ENCODE measurements at regions of chr2 and their contacts with region 1.

Region 1: GRCh38 chr2:136305517-136306192 is 187.7 kb upstream of the CXCR4 start:
- DNase-seq: peak; percentile 49 to 76
- ATAC-seq: peak; percentile 96 to 100 (median 98)
- H3K4me3 ChIP-seq: no peak overlapping the region
- H3K4me3 Mint-ChIP-seq: no peak overlapping the region
- H3K27ac ChIP-seq: no peak overlapping the region
- H3K27ac Mint-ChIP-seq: peak overlapping the region in 1 of 2 donors; percentile 72
- H3K4me1 ChIP-seq: peaks cover 10% of the 10 kb centered on the region
- H3K4me1 Mint-ChIP-seq: peaks cover 9 to 11% of the 10 kb centered on the region in 2 donors
- H3K27me3 ChIP-seq: no peaks in the 10 kb centered on the region
- H3K27me3 Mint-ChIP-seq: peaks cover 10 to 14% of the 10 kb centered on the region in 2 donors
- CTCF ChIP-seq: no peak

Region 2: GRCh38 chr2:136281281-136282114 is 24.2 kb before region 1 on chr2:
- intact Hi-C with region 1: loop called (anchors 1 kb)
- DNase-seq: peak; percentile 46 to 91
- ATAC-seq: peak; percentile 85 to 91 (median 85)
- H3K4me3 ChIP-seq: no peak overlapping the region
- H3K4me3 Mint-ChIP-seq: peak overlapping the region; percentile 13
- H3K27ac ChIP-seq: peak overlapping the region; percentile 66
- H3K27ac Mint-ChIP-seq: peak overlapping the region; percentile 91 to 92
- H3K4me1 ChIP-seq: peaks cover 35% of the 10 kb centered on the region
- H3K4me1 Mint-ChIP-seq: peaks cover 28 to 29% of the 10 kb centered on the region in 2 donors
- H3K27me3 ChIP-seq: no peaks in the 10 kb centered on the region
- H3K27me3 Mint-ChIP-seq: no peaks in the 10 kb centered on the region
- CTCF ChIP-seq: no peak

Region 3: GRCh38 chr2:136411946-136412345 is 106.3 kb after region 1 on chr2:
- intact Hi-C with region 1: no loop called
- DNase-seq: no peak
- ATAC-seq: no peak
- H3K4me3 ChIP-seq: no peak overlapping the region
- H3K4me3 Mint-ChIP-seq: no peak overlapping the region
- H3K27ac ChIP-seq: no peak overlapping the region
- H3K27ac Mint-ChIP-seq: no peak overlapping the region
- H3K4me1 ChIP-seq: peaks cover 5% of the 10 kb centered on the region
- H3K4me1 Mint-ChIP-seq: peaks cover 0 to 5% of the 10 kb centered on the region in 2 donors
- H3K27me3 ChIP-seq: peaks cover 6% of the 10 kb centered on the region
- H3K27me3 Mint-ChIP-seq: peaks cover 22 to 30% of the 10 kb centered on the region in 2 donors
- CTCF ChIP-seq: no peak

Measured in natural killer cell (primary cell).